Mucosa of descending colon (tissue), 3 donors: ENCODE measurements at regions of chr2 and their contacts with region 1.

Region 1: DNA sequence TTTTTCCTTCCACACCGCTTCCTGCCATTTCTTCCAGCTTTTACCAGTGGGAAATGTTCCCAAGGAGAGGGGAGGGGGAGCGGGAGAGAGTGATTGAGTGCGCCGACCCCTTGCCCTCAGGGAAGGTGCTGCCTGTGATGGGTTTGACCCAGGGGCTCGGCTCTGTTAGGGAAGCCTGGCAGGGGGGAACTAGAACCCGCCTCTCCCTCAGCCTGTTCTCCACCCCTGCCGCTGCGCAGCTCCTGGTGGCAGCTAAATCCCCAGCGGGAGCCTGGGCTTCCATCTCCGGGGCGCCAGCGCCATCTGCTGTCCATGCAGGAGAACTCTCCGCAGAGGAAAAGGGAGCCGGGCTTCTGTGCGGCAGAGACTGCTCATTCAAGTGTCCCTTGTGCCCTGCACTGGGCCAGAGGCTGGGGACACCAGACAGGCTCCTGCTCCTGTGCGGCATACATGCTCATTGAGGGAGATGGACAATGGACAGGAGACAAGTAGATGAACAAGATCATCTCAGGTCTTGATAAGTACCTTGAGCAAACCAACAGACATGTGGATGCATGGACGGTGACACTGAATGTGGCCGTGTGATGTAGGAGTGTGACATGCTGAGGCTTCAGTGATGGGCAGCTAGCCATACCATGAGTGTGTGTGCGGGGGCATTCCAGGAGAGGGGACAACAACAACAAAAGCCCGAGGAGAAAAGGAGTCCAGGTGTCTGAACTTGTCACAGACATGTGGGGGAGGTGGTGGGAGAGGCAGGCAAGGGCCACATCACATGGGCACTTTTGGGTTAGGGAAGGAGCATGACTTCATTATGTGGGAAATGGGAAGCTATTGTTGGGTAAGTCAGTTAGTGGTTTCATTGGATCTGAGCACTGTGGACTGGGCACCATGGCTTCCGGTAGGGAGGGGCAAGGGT is 13.3 kb downstream of the CHPF start:
- DNase-seq: peak; percentile 73 to 91 (median 84)
- ATAC-seq: peak; percentile 92
- H3K4me3 ChIP-seq: no peak overlapping the region
- H3K4me1 ChIP-seq: no peaks in the 10 kb centered on the region
- CTCF ChIP-seq: peak; percentile 92

Region 2: GRCh38 chr2:219402665-219403515 is 127.4 kb before region 1 on chr2:
- intact Hi-C with region 1: loop called (anchors 5 to 10 kb)
- DNase-seq: peak in 1 of 3 donors; percentile 74
- ATAC-seq: peak; percentile 55
- H3K4me3 ChIP-seq: no peak overlapping the region
- H3K4me1 ChIP-seq: peaks cover 14% of the 10 kb centered on the region
- CTCF ChIP-seq: peak; percentile 64

Region 3: GRCh38 chr2:219475697-219476651 is 54.3 kb before region 1 on chr2:
- intact Hi-C with region 1: loop called in 1 of 2 experiments (anchors 2 kb)
- DNase-seq: peak; percentile 60 to 88 (median 85)
- ATAC-seq: peak; percentile 86
- H3K4me3 ChIP-seq: no peak overlapping the region
- H3K4me1 ChIP-seq: no peaks in the 10 kb centered on the region
- CTCF ChIP-seq: peak; percentile 84